ENCODE measurements at regions of chr11 and their contacts with region 1.

Region 1: GRCh38 chr11:39374963-39375698 is 2084.3 kb downstream of the LRRC4C start:
- DNase-seq: peak; percentile 48
- H3K4me3 Mint-ChIP-seq: no peak overlapping the region
- H3K27ac Mint-ChIP-seq: no peak overlapping the region
- H3K4me1 Mint-ChIP-seq: no peaks in the 10 kb centered on the region
- H3K27me3 Mint-ChIP-seq: no peaks in the 10 kb centered on the region
- CTCF ChIP-seq: peak; percentile 37

Region 2: DNA sequence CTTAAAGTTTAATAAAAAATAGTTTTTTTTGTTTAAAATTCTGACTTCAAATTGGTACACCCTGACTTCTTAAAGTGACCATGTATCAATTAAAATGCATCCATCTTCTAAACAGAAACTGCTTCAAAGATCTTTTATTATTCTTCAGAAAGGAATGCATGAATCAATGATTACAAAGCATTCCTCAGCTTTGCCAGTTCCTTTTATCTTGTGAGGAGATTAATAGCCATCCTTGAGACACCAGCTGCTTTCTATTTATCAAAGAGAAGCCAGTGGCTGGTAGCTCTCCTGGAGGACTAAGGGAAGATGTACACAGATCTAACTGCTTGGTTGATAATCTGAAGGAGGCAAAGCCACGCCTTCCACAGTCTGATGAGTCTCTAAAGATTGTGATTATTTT is 138.2 kb before region 1 on chr11:
- CTCF ChIA-PET with region 1: no interaction called
- POLR2A ChIA-PET with region 1: no interaction called
- intact Hi-C with region 1: no loop called
- DNase-seq: peak; percentile 1
- H3K4me3 Mint-ChIP-seq: no peak overlapping the region
- H3K27ac Mint-ChIP-seq: no peak overlapping the region
- H3K4me1 Mint-ChIP-seq: no peaks in the 10 kb centered on the region
- H3K27me3 Mint-ChIP-seq: no peaks in the 10 kb centered on the region
- CTCF ChIP-seq: no peak

Region 3: GRCh38 chr11:39461066-39461465 is 85.9 kb after region 1 on chr11:
- CTCF ChIA-PET with region 1: no interaction called
- POLR2A ChIA-PET with region 1: no interaction called
- intact Hi-C with region 1: no loop called
- DNase-seq: no peak
- H3K4me3 Mint-ChIP-seq: no peak overlapping the region
- H3K27ac Mint-ChIP-seq: no peak overlapping the region
- H3K4me1 Mint-ChIP-seq: no peaks in the 10 kb centered on the region
- H3K27me3 Mint-ChIP-seq: no peaks in the 10 kb centered on the region
- CTCF ChIP-seq: no peak

Region 4: DNA sequence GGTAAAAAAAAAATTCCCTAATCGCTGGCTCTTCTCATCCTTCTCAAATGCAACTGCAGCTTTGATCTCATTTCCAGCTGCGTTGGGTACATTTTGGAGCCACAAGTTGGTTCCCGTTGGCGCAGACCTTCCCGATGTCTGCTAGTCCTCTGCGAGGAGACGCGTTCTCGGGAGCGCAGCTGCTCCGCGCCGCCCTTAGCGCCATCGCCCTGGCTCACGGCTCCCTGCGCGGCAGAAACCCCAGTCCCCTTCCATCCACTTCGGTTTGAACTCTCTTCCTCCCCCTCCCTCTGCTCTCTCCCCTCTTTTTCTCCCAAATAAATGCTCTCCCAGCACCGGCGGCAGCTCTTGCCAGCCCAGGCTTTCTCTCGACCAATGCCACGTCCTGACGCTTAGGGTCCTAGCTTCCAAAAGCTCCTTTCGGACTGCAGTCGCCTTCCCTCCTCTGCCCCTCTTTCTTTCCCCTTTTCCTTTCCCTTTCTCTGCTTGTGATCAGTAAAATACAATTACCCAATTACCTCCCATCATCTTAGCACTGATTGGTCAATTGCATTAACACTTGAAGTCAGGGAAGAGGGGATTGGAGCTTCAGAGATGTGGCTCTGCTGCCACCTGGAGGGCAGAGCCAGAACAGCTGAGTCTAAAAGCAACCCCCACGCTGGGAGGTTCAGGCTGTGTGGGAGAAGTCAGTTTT is 918.7 kb after region 1 on chr11:
- CTCF ChIA-PET with region 1: interaction called, 4 read pairs
- POLR2A ChIA-PET with region 1: no interaction called
- intact Hi-C with region 1: loop called (anchors 5 kb)
- DNase-seq: peak; percentile 80
- H3K4me3 Mint-ChIP-seq: peak overlapping the region; percentile 78
- H3K27ac Mint-ChIP-seq: peak overlapping the region; percentile 0
- H3K4me1 Mint-ChIP-seq: peaks cover 9% of the 10 kb centered on the region
- H3K27me3 Mint-ChIP-seq: no peaks in the 10 kb centered on the region
- CTCF ChIP-seq: peak; percentile 83